Activated naive CD4-positive, alpha-beta T cell treated with anti-CD3 and anti-CD28 coated beads for 36 hours (primary cell): ENCODE measurements at regions of chr5 and their contacts with region 1.

Region 1: GRCh38 chr5:76402886-76403765 is at the start of gene IQGAP2:
- DNase-seq: peak; percentile 79
- H3K4me3 Mint-ChIP-seq: peak within 1 kb of the TSS; percentile 95
- H3K27ac Mint-ChIP-seq: peak within 1 kb of the TSS; percentile 98
- H3K4me1 Mint-ChIP-seq: peaks cover 44% of the 10 kb centered on the region
- H3K27me3 Mint-ChIP-seq: no peaks in the 10 kb centered on the region
- total RNA-seq, gene IQGAP2: 54.6 to 55.9 TPM

Region 2: DNA sequence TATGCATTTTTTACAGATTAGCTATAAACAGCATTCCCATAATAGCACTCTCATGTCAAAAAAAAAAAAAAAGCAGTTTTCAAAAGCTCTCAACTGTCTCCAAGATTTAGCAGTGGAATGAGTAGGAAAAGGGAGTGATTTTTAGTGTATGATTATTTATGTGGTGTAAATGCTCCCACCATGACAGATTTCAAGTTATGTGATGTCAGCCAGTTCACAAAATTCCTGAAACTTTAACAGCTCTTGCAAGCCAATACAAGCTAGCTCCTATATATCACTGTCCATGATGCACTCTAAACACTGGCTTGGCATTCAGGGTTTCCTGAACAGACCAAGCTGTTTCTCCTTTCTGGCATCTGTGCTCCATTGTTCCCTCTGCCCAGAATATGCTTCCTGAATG is 799.8 kb before region 1 on chr5:
- CTCF ChIA-PET with region 1: no interaction called
- intact Hi-C with region 1: no loop called
- DNase-seq: no peak
- H3K4me3 Mint-ChIP-seq: no peak overlapping the region
- H3K27ac Mint-ChIP-seq: no peak overlapping the region
- H3K4me1 Mint-ChIP-seq: peaks cover 4% of the 10 kb centered on the region
- H3K27me3 Mint-ChIP-seq: no peaks in the 10 kb centered on the region

Region 3: DNA sequence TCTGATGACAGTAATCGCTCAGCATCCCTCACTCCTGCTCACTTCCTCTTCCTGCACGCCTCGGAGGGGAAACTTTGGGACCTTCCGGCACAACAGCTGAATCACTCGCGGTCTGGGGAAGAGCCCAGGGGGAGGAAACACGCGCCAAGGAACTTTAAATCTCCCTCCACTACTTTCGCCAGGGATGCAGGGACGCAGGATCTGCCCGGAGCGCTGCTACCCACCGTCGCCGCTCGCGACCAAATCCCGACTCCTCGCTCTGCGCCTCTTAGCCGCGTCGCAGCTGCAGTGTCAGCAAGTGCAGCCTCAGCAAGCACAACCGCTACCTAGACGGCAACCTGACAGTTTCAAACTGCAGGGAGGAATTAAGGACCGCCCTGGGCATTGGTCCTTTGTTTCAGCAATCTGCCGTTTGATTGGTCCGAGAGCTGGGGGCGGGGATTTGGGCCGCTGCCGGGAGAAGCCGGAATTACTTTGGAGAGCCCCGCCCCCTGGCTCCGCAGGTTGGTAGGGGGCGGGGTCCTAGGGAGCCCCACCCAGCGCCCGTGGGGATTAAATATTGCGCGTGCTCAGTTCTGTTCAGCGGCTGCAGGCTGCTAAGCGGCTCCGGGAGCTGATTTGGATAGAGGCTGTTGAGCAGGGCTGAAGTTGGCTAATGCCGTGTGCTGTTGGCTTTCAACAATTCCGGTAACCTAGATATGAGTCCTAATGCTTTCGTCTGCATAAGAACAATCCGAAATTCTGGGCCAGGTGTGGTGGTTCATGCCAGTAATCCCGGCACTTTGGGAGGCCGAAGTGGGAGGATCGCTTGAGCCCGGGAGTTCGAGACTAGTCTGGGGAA is 685.8 kb before region 1 on chr5 and contains the start of gene POC5:
- CTCF ChIA-PET with region 1: no interaction called
- intact Hi-C with region 1: loop called (anchors 5 kb)
- DNase-seq: peak; percentile 98
- H3K4me3 Mint-ChIP-seq: peak within 1 kb of the TSS; percentile 99
- H3K27ac Mint-ChIP-seq: peak within 1 kb of the TSS; percentile 99
- H3K4me1 Mint-ChIP-seq: peaks cover 30% of the 10 kb centered on the region
- H3K27me3 Mint-ChIP-seq: no peaks in the 10 kb centered on the region
- total RNA-seq, gene POC5: 17.5 to 17.7 TPM

Region 4: GRCh38 chr5:76016258-76016657 is 386.9 kb before region 1 on chr5:
- CTCF ChIA-PET with region 1: no interaction called
- intact Hi-C with region 1: no loop called
- DNase-seq: no peak
- H3K4me3 Mint-ChIP-seq: no peak overlapping the region
- H3K27ac Mint-ChIP-seq: no peak overlapping the region
- H3K4me1 Mint-ChIP-seq: no peaks in the 10 kb centered on the region
- H3K27me3 Mint-ChIP-seq: peaks cover 13% of the 10 kb centered on the region

Region 5: GRCh38 chr5:76283670-76284069 is 119.5 kb before region 1 on chr5:
- CTCF ChIA-PET with region 1: no interaction called
- intact Hi-C with region 1: no loop called
- DNase-seq: no peak
- H3K4me3 Mint-ChIP-seq: no peak overlapping the region
- H3K27ac Mint-ChIP-seq: no peak overlapping the region
- H3K4me1 Mint-ChIP-seq: no peaks in the 10 kb centered on the region
- H3K27me3 Mint-ChIP-seq: no peaks in the 10 kb centered on the region

Region 6: DNA sequence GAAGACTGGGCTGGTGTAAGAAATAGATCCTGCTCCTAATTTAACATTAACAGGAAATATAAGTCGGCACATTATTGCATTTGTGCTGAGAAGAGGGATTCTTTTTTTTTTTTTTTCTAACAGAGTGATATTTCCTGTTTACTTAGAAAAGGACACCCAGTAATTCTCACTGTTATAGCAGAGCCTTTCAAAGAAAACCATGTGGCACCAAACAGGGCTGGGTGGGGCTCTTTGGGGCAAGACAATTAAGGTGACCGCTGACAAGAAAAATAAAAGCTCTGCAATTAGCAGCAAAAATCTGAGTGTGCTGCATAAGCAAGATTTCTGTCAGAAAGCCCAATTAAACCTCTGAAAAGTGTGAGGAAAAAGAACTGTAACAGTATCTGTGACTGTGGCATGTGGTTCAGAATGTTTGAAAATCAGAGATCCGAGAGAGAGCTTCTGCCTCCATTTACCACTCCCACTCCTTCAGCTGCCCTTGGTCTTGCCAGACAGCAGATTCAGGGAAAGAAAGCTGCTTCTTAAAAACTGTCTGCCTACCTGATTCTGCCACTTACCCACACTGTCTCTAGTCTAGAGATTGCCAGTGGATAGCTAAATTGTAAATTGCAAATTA is 77.1 kb before region 1 on chr5:
- CTCF ChIA-PET with region 1: no interaction called
- intact Hi-C with region 1: loop called (anchors 2 kb)
- DNase-seq: peak; percentile 34
- H3K4me3 Mint-ChIP-seq: peak overlapping the region; percentile 45
- H3K27ac Mint-ChIP-seq: peak overlapping the region; percentile 26
- H3K4me1 Mint-ChIP-seq: peaks cover 43% of the 10 kb centered on the region
- H3K27me3 Mint-ChIP-seq: no peaks in the 10 kb centered on the region

Region 7: DNA sequence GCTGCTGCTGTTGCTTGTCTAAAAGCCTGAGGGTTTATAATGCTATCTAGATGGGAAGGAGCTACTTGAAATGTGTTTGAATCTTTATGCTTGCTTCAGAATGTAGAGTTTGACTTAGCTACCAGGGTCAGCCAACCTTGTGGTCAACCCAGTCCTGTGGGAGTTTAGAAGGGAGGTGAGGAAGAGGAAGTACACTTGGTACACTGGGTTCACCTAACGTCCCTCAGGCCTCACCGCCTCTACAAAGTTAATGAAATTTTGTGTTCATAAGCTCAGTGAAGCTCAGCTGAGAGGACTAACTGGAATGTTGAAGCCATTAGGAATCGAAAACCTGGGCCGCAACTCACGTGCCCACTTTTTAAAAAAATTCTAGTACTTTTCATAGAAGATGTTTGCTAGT is 10.6 kb after region 1 on chr5:
- CTCF ChIA-PET with region 1: interaction called, 12 read pairs
- intact Hi-C with region 1: loop called (anchors 1 kb)
- DNase-seq: no peak
- H3K4me3 Mint-ChIP-seq: no peak overlapping the region
- H3K27ac Mint-ChIP-seq: no peak overlapping the region
- H3K4me1 Mint-ChIP-seq: peaks cover 51% of the 10 kb centered on the region
- H3K27me3 Mint-ChIP-seq: no peaks in the 10 kb centered on the region

Region 8: DNA sequence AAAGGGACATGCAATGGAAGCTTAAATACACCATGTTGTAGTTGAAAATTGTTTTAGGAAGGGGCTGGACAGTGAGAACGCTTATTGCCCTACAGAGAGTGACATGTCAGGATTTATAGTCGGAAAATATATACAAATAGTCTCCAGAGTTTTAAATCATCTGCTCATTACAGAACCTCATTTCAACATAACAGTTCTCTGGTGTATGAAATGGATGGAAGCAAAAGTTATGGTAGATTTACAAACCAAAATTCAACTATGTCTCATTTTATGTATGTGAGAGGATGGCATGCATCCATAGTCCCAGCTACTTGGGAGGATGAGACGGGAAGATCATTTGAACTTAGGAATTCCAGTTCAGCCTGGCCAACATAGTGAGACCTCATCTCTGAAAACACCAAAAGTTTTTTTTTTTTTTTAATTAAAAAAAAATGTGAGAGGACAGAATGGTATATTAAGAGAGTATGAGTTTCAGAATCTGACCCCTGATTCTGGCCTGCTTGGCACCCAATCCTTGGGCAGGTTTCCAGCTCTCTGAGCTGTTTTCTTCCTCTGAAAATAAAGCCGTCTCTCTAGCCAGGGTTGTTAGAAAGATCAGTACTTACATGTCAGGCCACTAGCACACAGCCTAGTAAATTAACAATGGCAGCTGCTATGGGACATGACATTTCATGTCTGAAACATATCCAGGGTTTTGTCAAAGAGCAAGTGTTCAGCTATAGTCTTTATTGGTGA is 40.1 kb after region 1 on chr5:
- CTCF ChIA-PET with region 1: no interaction called
- intact Hi-C with region 1: no loop called
- DNase-seq: no peak
- H3K4me3 Mint-ChIP-seq: no peak overlapping the region
- H3K27ac Mint-ChIP-seq: no peak overlapping the region
- H3K4me1 Mint-ChIP-seq: peaks cover 28% of the 10 kb centered on the region
- H3K27me3 Mint-ChIP-seq: no peaks in the 10 kb centered on the region

Region 9: GRCh38 chr5:76582230-76583162 is 179.4 kb after region 1 on chr5:
- CTCF ChIA-PET with region 1: interaction called, 33 read pairs
- intact Hi-C with region 1: loop called (anchors 1 kb)
- DNase-seq: peak; percentile 65
- H3K4me3 Mint-ChIP-seq: no peak overlapping the region
- H3K27ac Mint-ChIP-seq: peak overlapping the region; percentile 36
- H3K4me1 Mint-ChIP-seq: peaks cover 27% of the 10 kb centered on the region
- H3K27me3 Mint-ChIP-seq: no peaks in the 10 kb centered on the region

Region 10: GRCh38 chr5:76771705-76772405 is 368.7 kb after region 1 on chr5:
- CTCF ChIA-PET with region 1: no interaction called
- intact Hi-C with region 1: loop called (anchors 1 kb)
- DNase-seq: no peak
- H3K4me3 Mint-ChIP-seq: no peak overlapping the region
- H3K27ac Mint-ChIP-seq: no peak overlapping the region
- H3K4me1 Mint-ChIP-seq: peaks cover 2% of the 10 kb centered on the region
- H3K27me3 Mint-ChIP-seq: no peaks in the 10 kb centered on the region